ENCODE measurements at regions of chr6 and their contacts with region 1.

Region 1: DNA sequence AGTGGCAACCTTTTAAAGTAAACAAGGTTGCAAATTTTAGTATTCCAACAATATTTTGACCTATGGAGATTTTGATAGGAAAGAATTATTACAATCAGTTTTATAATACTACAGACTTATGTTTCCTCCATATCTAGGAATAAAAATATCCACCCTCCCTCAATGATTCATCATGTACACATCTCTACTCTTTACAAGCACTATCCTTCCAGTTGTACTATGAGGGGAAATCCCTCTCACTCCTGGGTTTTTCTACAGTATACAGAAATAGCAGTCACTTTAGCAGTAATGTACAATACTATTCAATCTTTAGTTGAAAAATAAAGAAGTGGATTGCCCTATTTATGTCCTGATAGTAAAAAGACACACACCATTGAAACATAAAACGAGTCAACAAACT is 46.3 kb upstream of the SCML4 start:
- DNase-seq: no peak
- ATAC-seq: peak; percentile 60
- H3K4me3 ChIP-seq: no peak overlapping the region
- H3K4me1 ChIP-seq: no peaks in the 10 kb centered on the region
- CTCF ChIP-seq: no peak

Region 2: GRCh38 chr6:108492131-108492766 is 621.9 kb after region 1 on chr6:
- intact Hi-C with region 1: loop called in 1 of 2 experiments (anchors 10 kb)
- DNase-seq: peak in 1 of 3 donors; percentile 15
- ATAC-seq: peak; percentile 48
- H3K4me3 ChIP-seq: no peak overlapping the region
- H3K4me1 ChIP-seq: no peaks in the 10 kb centered on the region
- CTCF ChIP-seq: no peak

Measured in mucosa of descending colon (tissue), 3 donors.